Caco-2 (cell line): ENCODE measurements at regions of chr9 and their contacts with region 1.

Region 1: DNA sequence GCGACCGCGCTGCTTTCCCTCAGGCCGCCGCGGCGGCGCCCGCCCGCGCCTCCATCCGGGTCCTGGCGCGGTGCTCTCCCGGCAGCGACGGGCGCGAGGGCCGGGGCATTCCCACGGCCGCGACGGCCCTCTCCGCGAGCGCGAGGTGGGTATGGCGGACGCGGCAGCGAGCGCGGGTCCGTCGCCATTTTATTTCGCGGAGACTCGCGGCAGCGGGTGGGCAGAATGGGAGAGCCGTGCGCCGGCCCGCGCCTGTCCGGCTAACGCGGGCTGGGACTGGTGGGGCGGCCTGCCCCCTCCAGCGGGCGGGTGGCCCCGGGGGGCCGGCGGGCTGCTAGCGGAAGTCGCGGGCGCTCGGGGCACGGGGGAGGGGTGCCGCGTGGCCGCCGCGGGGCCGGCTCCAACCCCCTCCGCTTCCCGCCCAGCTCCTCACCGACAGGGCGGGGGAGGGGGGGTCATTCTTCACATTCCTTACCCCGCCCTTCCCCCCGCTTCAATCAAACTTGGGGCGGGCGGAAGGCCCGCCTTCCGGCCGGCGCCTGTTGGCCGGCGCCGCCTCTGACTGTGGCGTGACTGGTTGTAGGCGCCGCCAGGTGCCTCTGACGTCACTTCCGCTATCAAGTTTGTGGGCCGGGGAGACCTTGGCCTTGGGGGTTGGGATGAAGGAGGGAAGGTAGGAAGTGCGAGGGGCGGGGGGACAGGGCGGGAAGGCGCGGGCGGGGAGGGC is 82.1 kb downstream of the PTPDC1 start:
- DNase-seq: peak; percentile 92 to 96
- H3K4me3 ChIP-seq: peak overlapping the region; percentile 86
- H3K4me3 Mint-ChIP-seq: peak overlapping the region; percentile 84
- H3K27ac Mint-ChIP-seq: peak overlapping the region; percentile 90
- H3K4me1 ChIP-seq: peaks cover 6% of the 10 kb centered on the region; the same call in 1 of the 2 replicates
- H3K4me1 Mint-ChIP-seq: peaks cover 7% of the 10 kb centered on the region
- H3K27me3 ChIP-seq: no peaks in the 10 kb centered on the region
- H3K27me3 Mint-ChIP-seq: no peaks in the 10 kb centered on the region
- CTCF ChIP-seq: no peak

Region 2: GRCh38 chr9:94065535-94065961 is 100.9 kb before region 1 on chr9:
- CTCF ChIA-PET with region 1: no interaction called
- POLR2A ChIA-PET with region 1: no interaction called
- intact Hi-C with region 1: loop called (anchors 2 kb)
- DNase-seq: peak; percentile 53
- H3K4me3 ChIP-seq: no peak overlapping the region
- H3K4me3 Mint-ChIP-seq: no peak overlapping the region
- H3K27ac Mint-ChIP-seq: no peak overlapping the region
- H3K4me1 ChIP-seq: no peaks in the 10 kb centered on the region
- H3K4me1 Mint-ChIP-seq: peaks cover 7% of the 10 kb centered on the region
- H3K27me3 ChIP-seq: no peaks in the 10 kb centered on the region
- H3K27me3 Mint-ChIP-seq: no peaks in the 10 kb centered on the region
- CTCF ChIP-seq: peak; percentile 39 to 69

Region 3: DNA sequence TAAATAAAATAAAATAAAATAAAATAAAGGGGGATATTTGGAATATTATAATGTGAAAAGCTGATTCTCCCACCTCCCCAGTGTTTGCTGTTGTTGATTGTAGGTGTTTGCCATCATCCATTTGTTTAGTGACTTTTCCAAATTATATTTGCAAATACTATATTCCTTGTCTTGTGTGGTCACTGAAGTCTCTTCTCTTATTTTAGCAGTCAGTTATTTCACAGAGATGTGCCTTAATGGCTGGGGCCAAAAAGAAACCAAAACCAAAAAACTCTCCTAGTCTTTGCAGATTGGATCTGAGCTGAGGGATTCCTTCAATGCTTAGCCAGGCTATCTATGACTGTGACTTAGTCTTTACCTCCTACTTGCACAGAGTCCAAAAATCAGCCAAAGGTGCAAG is 21.8 kb after region 1 on chr9:
- CTCF ChIA-PET with region 1: no interaction called
- POLR2A ChIA-PET with region 1: no interaction called
- intact Hi-C with region 1: no loop called
- DNase-seq: no peak
- H3K4me3 ChIP-seq: no peak overlapping the region
- H3K4me3 Mint-ChIP-seq: no peak overlapping the region
- H3K27ac Mint-ChIP-seq: no peak overlapping the region
- H3K4me1 ChIP-seq: no peaks in the 10 kb centered on the region
- H3K4me1 Mint-ChIP-seq: no peaks in the 10 kb centered on the region
- H3K27me3 ChIP-seq: no peaks in the 10 kb centered on the region
- H3K27me3 Mint-ChIP-seq: no peaks in the 10 kb centered on the region
- CTCF ChIP-seq: no peak

Region 4: DNA sequence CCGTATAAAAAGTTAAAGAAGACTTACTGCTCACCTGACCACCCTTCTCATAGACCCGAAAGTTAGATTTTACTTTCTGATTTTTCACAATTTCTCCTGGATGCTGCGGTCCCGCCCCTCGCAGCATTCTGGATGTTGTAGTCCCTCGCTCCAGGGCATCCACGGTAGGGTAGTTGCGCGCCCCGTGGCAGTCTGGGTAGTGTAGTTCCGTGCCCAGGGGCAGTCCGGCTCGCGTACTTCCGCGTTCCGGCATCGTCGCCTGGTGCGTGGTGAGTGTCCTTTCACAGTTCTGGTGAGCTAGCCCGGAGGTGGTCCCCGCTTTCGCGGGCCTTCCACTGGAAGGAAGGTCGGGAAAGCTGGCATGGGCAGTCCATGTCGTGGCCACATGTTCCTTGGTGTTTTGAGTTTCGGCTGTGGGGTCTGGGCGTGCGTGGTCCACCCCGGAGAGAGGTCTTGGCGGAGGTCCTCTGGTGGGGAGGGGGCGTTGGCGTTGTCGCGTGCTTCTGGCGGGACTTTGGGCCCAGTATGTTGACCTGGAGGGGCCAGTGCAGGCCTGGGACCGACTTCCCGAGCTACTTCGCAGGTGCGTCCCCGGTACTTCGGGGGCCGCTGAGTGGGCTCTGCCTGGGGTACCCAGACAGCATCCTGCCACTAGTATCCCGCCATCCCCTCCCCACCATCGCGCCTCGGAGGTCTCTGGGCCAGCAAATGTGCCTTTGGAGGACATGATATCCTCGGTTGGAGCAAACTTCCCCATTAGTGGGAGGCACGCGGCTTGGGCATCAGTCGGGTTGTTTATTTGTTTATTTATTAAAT is 92.9 kb after region 1 on chr9 and contains the start of gene ZNF169:
- CTCF ChIA-PET with region 1: no interaction called
- POLR2A ChIA-PET with region 1: no interaction called
- intact Hi-C with region 1: loop called (anchors 2 kb)
- DNase-seq: peak; percentile 86 to 91
- H3K4me3 ChIP-seq: peak within 1 kb of the TSS; percentile 67
- H3K4me3 Mint-ChIP-seq: peak within 1 kb of the TSS; percentile 96
- H3K27ac Mint-ChIP-seq: peak within 1 kb of the TSS; percentile 98
- H3K4me1 ChIP-seq: no peaks in the 10 kb centered on the region
- H3K4me1 Mint-ChIP-seq: no peaks in the 10 kb centered on the region
- H3K27me3 ChIP-seq: no peaks in the 10 kb centered on the region
- H3K27me3 Mint-ChIP-seq: no peaks in the 10 kb centered on the region
- CTCF ChIP-seq: no peak
- total RNA-seq, gene ZNF169: 3.3 and 3.7 TPM in 2 replicates